ENCODE measurements at regions of chr3 and their contacts with region 1.

Region 1: DNA sequence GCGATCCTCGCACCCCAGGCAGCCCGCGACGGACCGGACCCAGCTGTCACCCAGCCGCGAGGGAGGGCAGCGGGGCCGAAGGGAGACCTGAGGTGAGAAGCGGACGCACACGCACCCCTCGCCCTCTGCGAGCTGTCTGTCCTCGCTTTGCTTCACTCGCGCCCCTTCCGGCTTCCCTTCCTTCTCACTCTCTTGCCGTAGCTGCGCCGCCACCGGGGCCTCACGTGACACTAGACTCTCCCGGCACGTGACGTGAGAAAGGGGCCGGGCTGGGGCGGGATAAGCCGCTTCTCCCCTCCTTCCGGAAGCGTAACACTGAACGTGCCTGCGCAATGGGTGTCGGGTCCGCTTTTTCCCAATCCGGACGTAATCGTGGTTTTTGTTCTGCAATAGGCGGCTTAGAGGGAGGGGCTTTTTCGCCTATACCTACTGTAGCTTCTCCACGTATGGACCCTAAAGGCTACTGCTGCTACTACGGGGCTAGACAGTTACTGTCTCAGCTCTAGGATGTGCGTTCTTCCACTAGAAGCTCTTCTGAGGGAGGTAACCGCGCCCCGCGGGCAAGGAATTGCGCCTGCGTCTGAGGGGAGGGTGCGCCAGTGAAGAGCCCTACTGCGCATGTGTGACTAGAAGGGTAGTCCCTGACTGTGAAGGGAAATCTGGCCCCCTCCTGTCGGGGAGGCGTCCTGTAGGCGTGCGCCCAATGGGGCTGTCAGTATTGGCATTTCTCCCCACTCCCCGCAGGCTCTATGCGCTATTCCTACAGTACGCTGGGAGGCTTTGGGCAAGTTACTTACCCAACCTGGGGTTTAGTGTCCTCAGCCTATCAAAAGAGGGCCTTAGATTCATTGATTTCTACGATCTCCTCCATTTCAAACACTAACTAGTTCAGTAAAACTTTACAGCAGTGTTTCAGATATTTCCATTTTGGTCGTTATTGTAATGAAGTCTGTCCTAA is at the starts of genes ATG3 and SLC35A5:
- DNase-seq: peak; percentile 99
- H3K4me3 Mint-ChIP-seq: peak within 1 kb of the TSS; percentile 87
- H3K27ac Mint-ChIP-seq: peak within 1 kb of the TSS; percentile 98
- H3K4me1 Mint-ChIP-seq: peaks cover 31% of the 10 kb centered on the region
- H3K27me3 Mint-ChIP-seq: no peaks in the 10 kb centered on the region
- total RNA-seq, gene ATG3: 58.1 to 59.5 TPM
- total RNA-seq, gene SLC35A5: 15.5 to 17.8 TPM

Region 2: GRCh38 chr3:112136959-112137693 is 424.9 kb before region 1 on chr3:
- CTCF ChIA-PET with region 1: no interaction called
- POLR2A ChIA-PET with region 1: no interaction called
- intact Hi-C with region 1: loop called (anchors 2 kb)
- DNase-seq: peak; percentile 59
- H3K4me3 Mint-ChIP-seq: no peak overlapping the region
- H3K27ac Mint-ChIP-seq: no peak overlapping the region
- H3K4me1 Mint-ChIP-seq: peaks cover 70% of the 10 kb centered on the region
- H3K27me3 Mint-ChIP-seq: no peaks in the 10 kb centered on the region

Region 3: GRCh38 chr3:112489674-112490479 is 72.1 kb before region 1 on chr3:
- CTCF ChIA-PET with region 1: no interaction called
- POLR2A ChIA-PET with region 1: interaction called, 3 read pairs
- intact Hi-C with region 1: loop called (anchors 2 kb)
- DNase-seq: no peak
- H3K4me3 Mint-ChIP-seq: peak overlapping the region; percentile 47
- H3K27ac Mint-ChIP-seq: peak overlapping the region; percentile 68
- H3K4me1 Mint-ChIP-seq: peaks cover 64% of the 10 kb centered on the region
- H3K27me3 Mint-ChIP-seq: no peaks in the 10 kb centered on the region

Region 4: DNA sequence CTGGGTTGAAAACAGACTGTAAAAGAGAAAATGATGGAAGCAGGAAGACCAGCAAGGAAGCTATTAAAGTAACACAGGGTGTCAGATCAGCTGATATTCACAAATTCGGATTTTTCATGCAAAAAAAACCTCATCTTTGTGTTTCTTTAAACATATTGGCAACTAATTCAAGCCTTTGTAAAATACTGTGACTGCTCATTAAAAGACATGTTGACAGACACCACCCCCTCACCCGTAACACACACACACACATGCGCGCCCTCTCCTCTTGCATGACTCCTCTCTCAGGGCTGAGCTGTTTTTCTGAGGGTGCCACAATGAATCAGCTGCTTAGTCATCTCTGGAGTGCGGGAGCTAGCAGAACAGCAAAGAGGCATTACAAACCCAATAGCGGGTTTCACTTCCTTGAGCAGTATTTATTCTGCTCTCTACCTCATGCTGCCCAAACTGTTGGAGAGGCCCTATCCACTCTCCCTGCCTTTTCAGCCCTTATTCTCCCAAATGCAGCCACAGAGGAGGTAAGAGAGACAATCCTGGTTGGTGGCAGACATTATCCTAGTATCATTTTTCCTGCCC is 114.7 kb after region 1 on chr3:
- CTCF ChIA-PET with region 1: no interaction called
- POLR2A ChIA-PET with region 1: no interaction called
- intact Hi-C with region 1: loop called (anchors 5 kb)
- DNase-seq: peak; percentile 96
- H3K4me3 Mint-ChIP-seq: peak overlapping the region; percentile 14
- H3K27ac Mint-ChIP-seq: peak overlapping the region; percentile 14
- H3K4me1 Mint-ChIP-seq: peaks cover 52% of the 10 kb centered on the region
- H3K27me3 Mint-ChIP-seq: peaks cover 14% of the 10 kb centered on the region

Region 5: DNA sequence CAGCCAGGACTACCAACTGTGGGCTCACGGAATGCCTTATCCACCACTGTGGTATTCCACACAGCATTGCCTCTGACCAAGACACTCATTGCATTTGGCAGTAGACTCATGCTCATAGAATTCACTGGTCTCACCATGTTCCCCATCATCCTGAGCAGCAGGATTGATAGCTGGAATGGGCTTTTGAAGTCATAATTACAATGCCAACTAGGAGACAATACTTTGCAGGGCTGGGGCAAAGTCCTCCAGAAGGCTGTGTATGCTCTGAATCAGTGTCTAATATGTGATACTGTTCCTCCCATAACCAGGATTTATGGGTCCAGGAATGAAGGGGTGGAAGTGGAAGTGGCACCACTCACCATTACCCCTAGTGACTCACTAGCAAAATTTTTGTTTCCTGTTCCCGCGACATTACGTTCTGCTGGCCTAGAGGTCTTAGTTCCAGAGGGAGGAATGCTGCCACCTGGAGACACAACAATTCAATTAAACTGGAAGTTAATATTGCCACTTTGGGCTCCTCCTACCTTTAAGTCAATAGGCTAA is 137.5 kb after region 1 on chr3:
- CTCF ChIA-PET with region 1: no interaction called
- POLR2A ChIA-PET with region 1: no interaction called
- intact Hi-C with region 1: no loop called
- DNase-seq: no peak
- H3K4me3 Mint-ChIP-seq: no peak overlapping the region
- H3K27ac Mint-ChIP-seq: no peak overlapping the region
- H3K4me1 Mint-ChIP-seq: no peaks in the 10 kb centered on the region
- H3K27me3 Mint-ChIP-seq: peaks cover 3% of the 10 kb centered on the region

Region 6: GRCh38 chr3:113019182-113020137 is 457.4 kb after region 1 on chr3:
- CTCF ChIA-PET with region 1: no interaction called
- POLR2A ChIA-PET with region 1: no interaction called
- intact Hi-C with region 1: loop called (anchors 1 kb)
- DNase-seq: peak; percentile 95
- H3K4me3 Mint-ChIP-seq: peak overlapping the region; percentile 93
- H3K27ac Mint-ChIP-seq: peak overlapping the region; percentile 97
- H3K4me1 Mint-ChIP-seq: peaks cover 55% of the 10 kb centered on the region
- H3K27me3 Mint-ChIP-seq: no peaks in the 10 kb centered on the region

Measured in activated CD4-positive, alpha-beta memory T cell treated with anti-CD3 and anti-CD28 coated beads for 36 hours (primary cell).